ENCODE measurements at regions of chr13 and their contacts with region 1.

Region 1: DNA sequence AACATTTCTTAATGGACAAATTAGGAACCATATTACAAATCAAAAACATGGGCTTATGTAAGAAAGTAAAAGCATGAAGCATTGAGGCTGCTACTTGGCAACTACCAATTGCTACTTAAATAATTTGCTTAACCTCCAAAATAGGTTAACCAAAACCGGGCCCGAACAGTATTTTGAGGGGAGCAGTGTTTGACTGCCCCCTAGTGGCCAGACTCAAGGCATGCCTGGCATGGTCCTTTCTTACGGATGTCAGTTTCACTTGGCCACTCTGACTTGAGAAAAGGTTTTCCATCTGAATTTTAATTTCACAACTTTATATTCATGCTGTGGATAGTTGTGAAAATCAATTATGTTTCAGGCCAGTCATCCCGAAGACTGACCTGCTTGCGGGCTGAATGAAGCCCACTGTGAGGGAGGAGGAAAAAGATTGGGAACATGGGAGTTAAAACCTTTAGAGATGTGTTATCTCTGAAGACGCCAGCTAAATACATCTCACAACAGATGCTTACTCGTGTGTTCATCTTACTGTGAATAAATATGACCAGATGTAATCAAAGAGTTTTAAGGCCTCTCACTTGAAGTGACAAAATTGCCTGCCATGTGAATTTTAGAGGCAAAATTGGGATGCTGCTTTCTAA is 2.9 kb downstream of the RXFP2 start:
- DNase-seq: peak; percentile 5 to 53 (median 39)
- ATAC-seq: peak; percentile 87
- H3K4me3 ChIP-seq: no peak overlapping the region
- H3K4me3 Mint-ChIP-seq: no peak overlapping the region
- H3K27ac ChIP-seq: no peak overlapping the region
- H3K27ac Mint-ChIP-seq: no peak overlapping the region
- H3K4me1 ChIP-seq: no peaks in the 10 kb centered on the region
- H3K4me1 Mint-ChIP-seq: peaks cover 0 to 5% (median 3%) of the 10 kb centered on the region in 7 donors
- H3K27me3 ChIP-seq: no peaks in the 10 kb centered on the region
- H3K27me3 Mint-ChIP-seq: peaks cover 7 to 13% (median 12%) of the 10 kb centered on the region in 5 donors

Region 2: GRCh38 chr13:31236211-31236786 is 505.9 kb before region 1 on chr13:
- CTCF ChIA-PET with region 1: no interaction called
- POLR2A ChIA-PET with region 1: no interaction called
- intact Hi-C with region 1: loop called in 1 of 2 experiments (anchors 2 kb)
- DNase-seq: peak in 3 of 9 donors; percentile 2 to 10 (median 9)
- ATAC-seq: no peak
- H3K4me3 ChIP-seq: no peak overlapping the region
- H3K4me3 Mint-ChIP-seq: no peak overlapping the region
- H3K27ac ChIP-seq: no peak overlapping the region
- H3K27ac Mint-ChIP-seq: no peak overlapping the region
- H3K4me1 ChIP-seq: no peaks in the 10 kb centered on the region
- H3K4me1 Mint-ChIP-seq: peaks cover 0 to 1% (median 0%) of the 10 kb centered on the region in 7 donors
- H3K27me3 ChIP-seq: no peaks in the 10 kb centered on the region
- H3K27me3 Mint-ChIP-seq: no peaks in the 10 kb centered on the region

Region 3: GRCh38 chr13:31431722-31432137 is 310.5 kb before region 1 on chr13:
- CTCF ChIA-PET with region 1: no interaction called
- POLR2A ChIA-PET with region 1: no interaction called
- intact Hi-C with region 1: loop called in 1 of 2 experiments (anchors 1 kb)
- DNase-seq: peak in 2 of 9 donors; percentile 11 to 37
- ATAC-seq: peak; percentile 74
- H3K4me3 ChIP-seq: no peak overlapping the region
- H3K4me3 Mint-ChIP-seq: no peak overlapping the region
- H3K27ac ChIP-seq: no peak overlapping the region
- H3K27ac Mint-ChIP-seq: no peak overlapping the region
- H3K4me1 ChIP-seq: no peaks in the 10 kb centered on the region
- H3K4me1 Mint-ChIP-seq: no peaks in the 10 kb centered on the region
- H3K27me3 ChIP-seq: no peaks in the 10 kb centered on the region
- H3K27me3 Mint-ChIP-seq: peaks cover 2 to 25% (median 6%) of the 10 kb centered on the region in 5 donors

Measured in naive thymus-derived CD4-positive, alpha-beta T cell (primary cell).